Sciatic nerve (tissue), 2 donors: ENCODE measurements at regions of chr12 and their contacts with region 1.

Region 1: DNA sequence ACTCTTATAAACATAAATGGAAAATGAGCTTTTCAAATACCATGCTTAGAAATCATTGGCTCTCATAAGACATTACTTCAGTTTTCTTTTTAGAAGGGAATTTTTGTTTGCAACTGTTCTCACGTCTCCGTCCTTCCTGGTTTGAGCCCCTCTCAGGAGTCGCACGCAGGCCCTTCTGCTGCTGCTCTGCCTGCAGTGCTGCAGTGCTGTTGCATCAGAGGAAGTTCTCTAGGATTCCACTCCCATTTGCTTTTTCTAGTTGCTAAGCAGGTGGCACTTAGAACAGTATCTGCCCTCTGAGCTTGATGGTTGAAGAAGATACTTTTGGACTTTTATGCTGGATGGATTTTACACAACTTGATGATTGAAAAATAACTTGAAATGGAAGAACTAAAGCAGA is 70.8 kb downstream of the SCN8A start:
- DNase-seq: no peak
- ATAC-seq: no peak

Region 2: DNA sequence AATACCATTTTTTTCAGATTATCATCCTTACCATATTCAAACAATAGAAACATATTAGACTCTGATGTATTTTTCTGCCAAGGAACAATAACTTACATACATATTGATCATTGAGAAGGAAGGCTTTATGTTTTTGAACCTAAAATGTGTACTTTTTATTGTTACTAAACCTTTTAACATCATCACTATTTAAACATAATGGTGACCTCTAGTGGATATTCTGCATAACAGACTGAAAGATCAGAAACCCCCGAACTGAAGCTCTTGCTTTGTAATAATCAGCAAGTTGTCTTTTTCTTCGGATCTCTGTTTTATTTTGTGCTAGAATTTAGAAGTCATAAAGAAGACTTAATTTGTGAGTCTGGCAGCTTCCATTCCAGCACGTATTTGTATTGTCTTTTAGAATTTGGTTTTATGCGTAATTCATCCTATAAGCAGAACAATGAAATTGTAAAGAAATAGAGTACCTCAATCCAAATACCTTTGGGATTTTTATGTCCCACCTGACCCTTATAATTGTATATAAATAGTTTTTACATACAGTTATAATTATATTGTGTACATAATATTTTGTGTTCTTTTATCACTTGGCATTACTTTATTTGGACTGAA is 1023.9 kb before region 1 on chr12:
- intact Hi-C with region 1: loop called (anchors 5 kb)
- DNase-seq: no peak
- ATAC-seq: peak; percentile 63

Region 3: DNA sequence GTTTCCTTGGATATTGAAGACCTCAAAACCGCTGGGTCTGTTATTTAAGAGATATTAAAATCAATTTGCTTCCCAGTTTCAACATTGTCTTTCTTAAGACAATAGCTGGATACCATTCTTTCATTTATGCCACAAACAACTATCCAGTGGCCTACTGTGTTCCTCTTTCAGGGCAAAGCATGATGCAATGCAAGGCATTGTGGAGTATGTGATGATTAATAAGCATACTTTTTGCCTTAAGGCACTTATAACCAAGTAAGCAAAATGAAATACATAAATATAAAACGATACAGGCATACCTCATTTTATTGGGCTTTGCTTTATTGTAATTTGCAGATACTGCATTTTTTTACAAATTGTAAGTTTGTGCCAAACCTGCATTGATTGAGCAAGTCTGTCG is 25.3 kb before region 1 on chr12:
- intact Hi-C with region 1: no loop called
- DNase-seq: no peak
- ATAC-seq: no peak

Region 4: GRCh38 chr12:51721282-51721940 is 59.6 kb after region 1 on chr12:
- intact Hi-C with region 1: no loop called
- DNase-seq: peak; percentile 75
- ATAC-seq: peak; percentile 86